ENCODE measurements at regions of chr17 and their contacts with region 1.

Region 1: GRCh38 chr17:15431196-15431595 is 36.2 kb downstream of the CDRT4 start:
- DNase-seq: peak; percentile 93
- H3K4me3 ChIP-seq: no peak overlapping the region
- H3K27ac ChIP-seq: peak overlapping the region; percentile 50 to 88 (median 76)
- H3K4me1 ChIP-seq: peaks cover 0 to 53% (median 46%) of the 10 kb centered on the region in 4 donors
- H3K27me3 ChIP-seq: no peaks in the 10 kb centered on the region
- CTCF ChIP-seq: no peak
- EP300 ChIP-seq: peak; percentile 98 to 100 (median 100)
- POLR2A ChIP-seq: no peak

Region 2: DNA sequence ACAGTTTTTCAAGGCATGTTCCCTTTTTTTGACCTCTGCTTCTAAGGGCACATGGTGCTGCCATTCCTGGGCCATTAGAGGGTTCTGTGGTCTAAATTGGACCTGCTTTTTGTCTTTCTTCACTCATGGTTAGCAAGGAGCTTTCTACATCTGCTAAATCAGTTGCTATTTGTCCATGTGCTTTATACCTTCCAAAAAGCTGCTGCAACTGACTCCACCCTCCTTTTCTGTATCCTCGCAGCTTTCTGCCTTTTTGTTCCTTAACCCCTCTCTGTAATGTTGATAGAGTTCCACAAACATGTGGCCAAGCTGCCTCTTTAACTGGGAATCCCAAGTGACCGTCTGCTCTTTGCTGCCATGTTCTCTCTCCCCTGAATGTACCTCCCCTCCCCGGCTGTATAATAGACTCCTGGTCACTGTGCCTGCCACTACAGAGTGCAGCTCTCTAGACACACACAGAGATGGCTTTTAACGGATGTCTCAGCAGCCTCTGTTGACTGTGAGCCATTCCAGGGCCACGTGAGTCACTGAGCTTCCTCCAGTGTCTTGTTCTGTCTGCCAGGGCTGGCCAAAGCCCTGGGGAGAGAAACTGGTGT is 32.4 kb before region 1 on chr17:
- intact Hi-C with region 1: loop called (anchors 2 kb)
- DNase-seq: no peak
- H3K4me3 ChIP-seq: no peak overlapping the region
- H3K27ac ChIP-seq: peak overlapping the region; percentile 25 to 70 (median 68)
- H3K4me1 ChIP-seq: peaks cover 0 to 62% (median 49%) of the 10 kb centered on the region in 4 donors
- H3K27me3 ChIP-seq: no peaks in the 10 kb centered on the region
- CTCF ChIP-seq: no peak
- EP300 ChIP-seq: no peak
- POLR2A ChIP-seq: no peak

Region 3: GRCh38 chr17:15409721-15410250 is 21.4 kb before region 1 on chr17:
- intact Hi-C with region 1: loop called (anchors 2 kb)
- DNase-seq: peak; percentile 83
- H3K4me3 ChIP-seq: peak overlapping the region in 3 of 4 donors; percentile 10 to 28 (median 12)
- H3K27ac ChIP-seq: peak overlapping the region; percentile 80 to 84 (median 81)
- H3K4me1 ChIP-seq: peaks cover 0 to 44% (median 35%) of the 10 kb centered on the region in 4 donors
- H3K27me3 ChIP-seq: no peaks in the 10 kb centered on the region
- CTCF ChIP-seq: no peak
- EP300 ChIP-seq: peak in 3 of 4 donors; percentile 53 to 85 (median 80)
- POLR2A ChIP-seq: no peak